Ovary (tissue), 10 donors: ENCODE measurements at regions of chr10 and their contacts with region 1.

Region 1: DNA sequence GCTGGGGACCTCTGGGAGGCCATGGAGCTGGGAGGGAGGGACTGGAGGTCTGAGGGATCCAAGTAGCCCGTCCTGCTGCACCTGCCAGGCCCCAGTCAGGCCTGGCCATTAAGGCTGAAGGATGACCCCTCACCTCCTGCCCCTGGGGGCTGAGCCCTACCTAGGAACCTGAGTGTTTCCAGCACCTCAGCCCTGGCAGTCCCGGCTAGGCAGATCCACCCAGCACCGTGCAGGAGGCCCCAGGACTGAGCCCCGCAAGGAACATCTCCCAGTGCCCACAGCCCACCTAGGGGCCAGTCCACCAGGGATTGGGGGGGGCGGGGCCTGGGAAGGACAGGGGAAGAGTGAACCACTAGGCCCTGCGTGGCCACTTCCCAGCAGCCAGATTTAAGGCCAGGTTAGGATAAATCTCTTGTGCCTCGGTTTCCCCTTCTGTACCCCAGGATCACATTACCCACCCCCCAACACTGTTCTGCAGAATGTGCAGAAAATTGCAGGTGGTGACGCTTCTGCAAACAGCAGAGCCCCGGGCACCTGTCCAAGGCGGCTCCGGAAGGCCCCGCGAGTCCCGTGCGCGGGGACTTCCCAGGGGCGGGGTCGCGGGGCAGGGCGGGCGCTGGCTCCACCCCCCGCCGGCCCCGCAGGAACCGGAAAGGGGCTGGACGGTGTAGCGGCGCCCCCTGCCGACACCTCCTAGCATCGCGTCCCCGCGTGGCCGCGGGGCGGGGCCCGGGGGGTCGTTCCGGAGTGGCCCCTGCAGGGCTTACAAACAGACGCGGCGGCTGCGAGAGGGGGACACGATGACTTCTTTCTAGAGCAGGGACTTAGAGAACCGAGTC is 55.9 kb downstream of the PWWP2B start:
- DNase-seq: peak; percentile 82 to 93 (median 89)
- H3K4me3 ChIP-seq: no peak overlapping the region
- H3K27ac ChIP-seq: peak overlapping the region in 1 of 2 donors; percentile 74
- H3K4me1 ChIP-seq: peaks cover 12% of the 10 kb centered on the region
- H3K27me3 ChIP-seq: no peaks in the 10 kb centered on the region
- CTCF ChIP-seq: peak; percentile 95 to 97 (median 96)
- EP300 ChIP-seq: no peak
- POLR2A ChIP-seq: no peak

Region 2: GRCh38 chr10:132223156-132223590 is 229.7 kb before region 1 on chr10:
- intact Hi-C with region 1: loop called (anchors 2 to 10 kb)
- DNase-seq: peak; percentile 68 to 85 (median 81)
- H3K4me3 ChIP-seq: no peak overlapping the region
- H3K27ac ChIP-seq: no peak overlapping the region
- H3K4me1 ChIP-seq: no peaks in the 10 kb centered on the region
- H3K27me3 ChIP-seq: no peaks in the 10 kb centered on the region
- CTCF ChIP-seq: peak; percentile 82 to 91 (median 84)
- EP300 ChIP-seq: no peak
- POLR2A ChIP-seq: no peak

Region 3: GRCh38 chr10:132237871-132238270 is 215.0 kb before region 1 on chr10:
- intact Hi-C with region 1: loop called in 1 of 4 experiments (anchors 5 kb)
- DNase-seq: peak in 3 of 5 donors; percentile 28 to 61 (median 54)
- H3K4me3 ChIP-seq: no peak overlapping the region
- H3K27ac ChIP-seq: no peak overlapping the region
- H3K4me1 ChIP-seq: peaks cover 4% of the 10 kb centered on the region
- H3K27me3 ChIP-seq: no peaks in the 10 kb centered on the region
- CTCF ChIP-seq: no peak
- EP300 ChIP-seq: no peak
- POLR2A ChIP-seq: no peak

Region 4: GRCh38 chr10:132307823-132308587 is 144.8 kb before region 1 on chr10 and contains the start of gene STK32C:
- intact Hi-C with region 1: loop called in 1 of 4 experiments (anchors 5 kb)
- DNase-seq: peak; percentile 89 to 94 (median 92)
- H3K4me3 ChIP-seq: peak within 1 kb of the TSS; percentile 90
- H3K27ac ChIP-seq: peak within 1 kb of the TSS; percentile 2 to 64
- H3K4me1 ChIP-seq: peaks cover 4% of the 10 kb centered on the region
- H3K27me3 ChIP-seq: no peaks in the 10 kb centered on the region
- CTCF ChIP-seq: no peak
- EP300 ChIP-seq: no peak
- POLR2A ChIP-seq: no peak
- total RNA-seq, gene STK32C: 5.4 to 13.8 (median 9.5) TPM

Region 5: DNA sequence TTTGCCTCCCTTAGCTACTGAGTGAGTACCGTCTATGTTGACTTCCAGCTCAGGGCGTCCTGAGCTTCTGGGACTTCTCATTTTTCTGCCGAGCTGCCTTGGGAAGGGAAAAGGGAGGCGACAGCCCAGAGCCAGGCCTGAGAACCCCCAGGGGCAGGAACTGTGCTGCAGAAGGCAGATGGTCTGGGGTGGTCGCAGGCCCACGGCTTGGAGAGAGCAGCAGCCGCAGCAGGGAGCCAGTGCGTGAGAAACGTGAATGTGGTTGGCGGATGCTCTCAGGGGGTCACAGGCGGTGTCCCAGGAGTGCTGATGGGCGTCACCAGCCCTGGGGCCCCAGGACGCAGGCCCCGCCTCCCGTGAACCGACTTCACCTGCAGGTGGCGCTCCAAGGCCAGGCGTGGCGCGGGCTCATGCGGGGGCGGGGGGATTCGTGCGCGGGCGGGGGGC is 65.1 kb before region 1 on chr10:
- intact Hi-C with region 1: loop called (anchors 2 to 5 kb)
- DNase-seq: peak; percentile 79 to 90 (median 88)
- H3K4me3 ChIP-seq: no peak overlapping the region
- H3K27ac ChIP-seq: peak overlapping the region; percentile 37 to 64
- H3K4me1 ChIP-seq: peaks cover 13% of the 10 kb centered on the region
- H3K27me3 ChIP-seq: no peaks in the 10 kb centered on the region
- CTCF ChIP-seq: peak; percentile 47 to 82 (median 65)
- EP300 ChIP-seq: no peak
- POLR2A ChIP-seq: no peak

Region 6: DNA sequence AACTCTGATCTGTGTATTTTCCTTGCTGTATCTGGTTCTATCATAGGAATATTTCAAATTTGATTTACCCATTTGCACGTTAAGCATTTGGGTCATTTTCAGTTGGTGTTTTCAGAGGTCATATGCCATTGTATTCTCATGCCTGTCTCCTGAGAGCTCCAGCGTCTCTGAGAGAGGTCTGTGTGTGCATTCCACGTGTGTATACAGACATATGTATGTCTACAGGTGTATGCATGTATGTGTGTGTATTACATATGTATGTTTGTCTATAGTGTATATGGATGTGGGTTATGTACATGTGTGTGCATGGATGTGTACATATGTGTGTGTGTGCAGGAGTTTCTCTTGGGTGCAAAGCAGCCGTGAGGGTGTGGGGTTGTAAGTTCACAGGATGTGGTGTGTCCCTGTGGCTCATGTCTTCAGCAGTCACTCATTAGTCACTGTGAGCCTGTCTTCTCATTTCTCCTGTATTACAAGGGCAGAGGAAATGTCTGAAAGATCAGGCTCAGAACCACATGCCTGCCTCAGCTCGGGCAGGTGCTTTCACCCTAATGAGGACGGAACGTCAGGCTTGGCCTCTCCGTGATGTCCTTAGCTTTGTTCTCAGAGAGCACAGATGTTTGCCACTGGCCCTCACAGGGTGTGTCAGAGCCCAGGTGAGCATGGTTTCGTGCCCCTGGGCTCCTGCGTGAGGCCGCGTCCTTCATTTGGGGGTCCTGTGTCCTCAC is 231.5 kb after region 1 on chr10:
- intact Hi-C with region 1: no loop called
- DNase-seq: peak in 1 of 5 donors; percentile 11
- H3K4me3 ChIP-seq: no peak overlapping the region
- H3K27ac ChIP-seq: no peak overlapping the region
- H3K4me1 ChIP-seq: peaks cover 2% of the 10 kb centered on the region
- H3K27me3 ChIP-seq: no peaks in the 10 kb centered on the region
- CTCF ChIP-seq: no peak
- EP300 ChIP-seq: no peak
- POLR2A ChIP-seq: no peak